Gastrocnemius medialis (tissue), 4 donors: ENCODE measurements at regions of chrX and their contacts with region 1.

Region 1: DNA sequence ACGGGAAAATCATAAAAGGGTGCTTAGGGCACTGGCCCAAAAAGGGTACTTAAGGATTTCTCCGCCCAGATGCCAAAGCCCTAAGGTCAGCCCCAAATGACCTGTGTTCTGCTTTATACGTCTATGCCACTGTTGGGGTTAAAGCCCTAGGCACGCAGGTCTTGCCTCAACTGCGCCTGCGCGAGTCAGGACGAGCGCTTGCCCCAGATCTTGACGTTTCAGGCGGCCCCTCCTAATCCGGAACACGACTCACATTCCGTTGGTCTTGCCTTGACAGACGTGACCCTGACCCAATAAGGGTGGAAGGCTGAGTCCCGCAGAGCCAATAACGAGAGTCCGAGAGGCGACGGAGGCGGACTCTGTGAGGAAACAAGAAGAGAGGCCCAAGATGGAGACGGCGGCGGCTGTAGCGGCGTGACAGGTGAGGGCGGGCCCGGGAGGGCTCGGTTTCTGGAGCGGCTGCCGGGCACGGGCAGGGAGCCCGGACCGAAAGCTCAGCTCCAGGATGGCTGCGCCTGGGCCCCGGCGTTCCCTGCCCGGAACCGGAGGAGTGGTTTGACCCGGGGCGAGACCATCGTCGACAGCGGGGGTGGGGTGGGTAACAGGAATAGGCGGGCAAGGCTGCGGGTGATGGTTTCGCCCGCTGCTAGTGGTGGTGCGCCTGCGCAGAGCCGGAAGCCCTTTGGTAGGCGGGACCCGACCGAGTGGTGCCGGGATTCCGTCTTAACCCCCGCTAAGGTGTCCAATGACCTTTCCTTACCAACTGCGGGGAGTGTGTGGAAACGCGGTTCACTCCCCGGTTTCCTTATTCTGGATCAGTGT is at the start of gene ARAF:
- DNase-seq: peak; percentile 96 to 99
- ATAC-seq: peak; percentile 91 to 93
- H3K4me3 ChIP-seq: peak within 1 kb of the TSS; percentile 66 to 74 (median 72)
- H3K27ac ChIP-seq: peak within 1 kb of the TSS; percentile 86 to 98 (median 94)
- H3K4me1 ChIP-seq: peaks cover 3 to 17% of the 10 kb centered on the region in 2 donors
- H3K27me3 ChIP-seq: no peaks in the 10 kb centered on the region
- CTCF ChIP-seq: no peak
- POLR2A ChIP-seq: peak; percentile 29 to 45
- total RNA-seq, gene ARAF: 44.8 to 93.3 (median 66.7) TPM

Region 2: DNA sequence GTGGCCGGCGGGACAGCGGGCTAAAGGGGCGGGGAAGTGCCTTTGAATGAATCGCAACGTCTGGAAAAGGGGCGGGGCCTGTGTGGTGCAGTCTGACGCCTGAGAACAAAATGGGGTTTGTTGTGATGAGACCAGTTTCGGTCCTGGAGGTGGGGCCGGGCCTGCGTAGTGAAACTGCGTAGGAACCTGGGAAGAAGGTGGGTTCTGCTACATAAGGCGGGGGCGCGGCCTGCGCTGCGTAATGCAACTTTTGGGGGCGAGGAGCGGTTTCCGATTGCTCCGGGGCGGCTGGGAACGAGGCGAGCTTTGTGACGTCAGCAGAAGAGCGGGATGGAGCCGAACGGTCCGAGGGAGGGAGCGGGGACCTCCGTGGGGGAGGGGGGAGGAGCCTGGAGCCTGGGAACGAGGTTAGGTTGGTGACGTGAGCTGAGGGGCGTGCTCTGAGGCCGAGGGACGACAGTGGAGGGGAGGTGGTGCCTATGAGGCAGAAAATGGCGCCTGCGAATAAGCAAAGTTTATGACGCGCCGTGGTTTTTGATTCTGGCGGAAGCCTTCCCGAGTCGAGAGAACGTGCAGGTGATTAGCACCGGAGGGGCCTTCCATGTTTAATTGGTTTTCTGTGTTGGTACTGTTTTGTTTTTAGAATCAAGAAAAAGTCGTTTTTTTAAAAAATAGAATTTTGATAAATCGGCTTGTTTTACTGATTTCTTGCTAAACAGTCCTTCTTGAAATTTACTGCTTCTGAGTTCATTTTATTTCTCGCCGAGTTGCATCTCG is 327.5 kb before region 1 on chrX:
- in situ Hi-C with region 1: no loop called
- intact Hi-C with region 1: loop called (anchors 2 kb)
- DNase-seq: peak; percentile 91 to 94
- ATAC-seq: peak; percentile 92 to 94
- H3K4me3 ChIP-seq: peak overlapping the region; percentile 57 to 84 (median 74)
- H3K27ac ChIP-seq: peak overlapping the region; percentile 88 to 93 (median 91)
- H3K4me1 ChIP-seq: peaks cover 0 to 3% of the 10 kb centered on the region in 2 donors
- H3K27me3 ChIP-seq: no peaks in the 10 kb centered on the region
- CTCF ChIP-seq: no peak
- POLR2A ChIP-seq: peak; percentile 36 to 76

Region 3: DNA sequence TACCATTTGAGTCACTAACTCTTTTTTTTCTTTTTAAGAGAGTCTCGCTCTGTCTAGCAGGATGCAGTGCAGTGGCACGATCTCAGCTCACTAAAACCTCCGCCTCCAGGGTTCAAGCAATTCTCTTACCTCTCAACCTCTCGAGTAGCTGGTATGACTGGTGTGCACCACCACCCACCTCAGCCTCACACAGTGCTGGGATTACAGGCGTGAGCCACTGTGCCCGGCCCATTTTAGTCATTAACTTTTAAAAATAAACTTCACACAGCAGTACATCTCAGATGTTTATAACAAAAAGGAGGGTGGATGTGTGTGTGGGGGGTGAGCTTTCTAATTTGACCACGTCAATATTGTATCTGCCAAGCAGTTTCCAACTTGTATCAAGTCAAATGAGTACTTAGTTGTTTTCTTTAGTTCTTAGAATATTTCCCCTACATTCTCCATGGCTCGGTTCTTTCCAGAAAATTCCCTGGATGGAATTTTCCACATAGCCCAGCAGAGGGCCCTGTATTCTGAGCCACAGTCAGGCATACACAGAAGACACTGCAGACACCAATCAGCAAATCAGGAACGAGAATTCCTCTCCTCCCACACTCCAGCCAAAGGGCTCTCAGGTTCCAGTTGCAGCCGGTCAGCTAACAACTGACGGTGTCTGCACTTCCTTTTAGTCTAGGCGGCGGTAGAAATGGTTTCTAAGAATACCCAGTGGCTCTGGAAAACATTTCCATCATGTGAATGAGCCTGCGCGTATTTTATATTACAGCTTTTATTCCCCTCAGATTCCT is 20.1 kb before region 1 on chrX:
- in situ Hi-C with region 1: no loop called
- intact Hi-C with region 1: loop called (anchors 1 kb)
- DNase-seq: peak; percentile 80 to 87
- ATAC-seq: peak; percentile 100
- H3K4me3 ChIP-seq: peak overlapping the region in 1 of 4 donors; percentile 11
- H3K27ac ChIP-seq: peak overlapping the region; percentile 78 to 85 (median 82)
- H3K4me1 ChIP-seq: peaks cover 10 to 16% of the 10 kb centered on the region in 2 donors
- H3K27me3 ChIP-seq: no peaks in the 10 kb centered on the region
- CTCF ChIP-seq: peak; percentile 41 to 58 (median 52)
- POLR2A ChIP-seq: peak; percentile 27 to 47

Region 4: DNA sequence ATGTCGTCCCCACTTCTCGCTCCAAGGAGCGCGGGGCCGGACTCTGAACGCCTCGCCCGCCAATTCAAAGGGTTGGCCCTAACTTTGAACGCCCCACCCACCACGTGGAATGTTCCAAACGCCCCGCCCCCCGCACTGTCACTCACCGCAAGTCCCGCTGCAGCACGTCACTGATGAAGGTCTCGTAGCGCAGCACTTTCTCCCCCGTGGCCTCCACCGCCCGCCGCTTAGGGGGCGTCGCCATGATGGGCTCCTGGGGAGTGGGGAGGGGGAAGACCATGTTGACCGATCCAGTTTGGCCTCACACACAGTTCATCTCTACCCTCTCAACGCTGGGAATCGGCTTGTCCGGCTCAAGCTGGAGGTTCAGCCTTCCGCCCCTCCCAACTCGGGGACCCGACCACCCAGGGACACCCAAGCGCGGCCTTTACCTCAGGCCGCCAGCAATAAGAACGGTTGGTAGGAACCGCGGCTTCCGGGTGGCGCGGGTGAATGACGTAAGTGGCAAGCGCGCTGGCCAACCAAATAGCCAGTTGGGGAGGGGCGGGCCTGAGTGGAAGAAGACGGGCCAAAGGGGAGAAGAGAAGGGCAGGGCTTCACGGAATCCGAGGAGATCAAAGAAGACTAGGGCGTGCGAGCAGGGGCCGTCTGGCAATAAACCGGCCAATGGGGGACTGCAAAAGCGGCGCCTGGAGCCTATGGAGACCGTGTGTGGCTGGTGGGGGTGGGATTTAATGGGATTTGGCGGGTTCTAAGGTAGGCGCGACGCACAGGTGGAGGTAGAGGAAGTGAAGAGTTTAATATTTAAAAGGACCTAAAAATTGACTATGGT is 97.9 kb after region 1 on chrX and contains the start of gene UXT:
- in situ Hi-C with region 1: loop called in 1 of 4 experiments (anchors 10 kb)
- intact Hi-C with region 1: loop called (anchors 2 kb)
- DNase-seq: peak; percentile 79 to 89
- ATAC-seq: peak; percentile 95 to 96
- H3K4me3 ChIP-seq: peak within 1 kb of the TSS; percentile 57 to 81 (median 70)
- H3K27ac ChIP-seq: peak within 1 kb of the TSS; percentile 88 to 96 (median 92)
- H3K4me1 ChIP-seq: no peaks in the 10 kb centered on the region
- H3K27me3 ChIP-seq: no peaks in the 10 kb centered on the region
- CTCF ChIP-seq: no peak
- POLR2A ChIP-seq: peak; percentile 66 to 68
- total RNA-seq, gene UXT: 92.3 to 153 (median 109) TPM

Region 5: DNA sequence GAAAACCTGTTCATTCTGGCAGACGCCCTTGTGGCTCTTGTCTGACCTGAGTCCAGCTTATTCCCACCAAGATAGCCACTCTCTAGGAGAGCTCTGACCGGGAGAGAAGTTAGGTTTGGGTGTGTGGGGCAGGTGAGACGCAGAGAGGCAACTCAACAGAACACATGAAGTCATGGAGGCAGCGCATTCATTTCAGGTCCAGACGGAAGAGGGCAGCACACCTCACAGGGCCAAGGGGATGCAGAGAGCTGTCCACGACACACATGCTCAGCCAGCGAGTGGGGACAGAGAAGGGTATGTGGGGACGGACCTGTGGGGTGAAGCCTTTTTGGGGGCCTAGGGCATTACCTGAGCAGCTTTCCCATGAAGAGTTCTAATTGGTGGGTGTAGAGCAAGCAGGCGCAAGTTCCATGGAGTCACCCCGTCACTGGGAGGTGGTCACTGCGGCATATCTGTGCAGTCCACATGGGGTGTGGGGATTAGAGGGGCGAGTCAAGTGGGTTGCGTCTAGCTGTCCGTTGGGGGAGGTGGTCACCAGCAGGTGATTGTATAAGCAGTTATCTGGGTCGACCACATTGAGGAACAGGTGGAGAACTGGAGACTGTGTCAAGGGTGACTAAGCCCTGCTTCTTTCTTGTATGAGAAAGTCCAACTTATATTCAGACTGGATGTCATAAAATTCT is 122.2 kb after region 1 on chrX:
- in situ Hi-C with region 1: no loop called
- intact Hi-C with region 1: no loop called
- DNase-seq: no peak
- ATAC-seq: no peak
- H3K4me3 ChIP-seq: no peak overlapping the region
- H3K27ac ChIP-seq: no peak overlapping the region
- H3K4me1 ChIP-seq: no peaks in the 10 kb centered on the region
- H3K27me3 ChIP-seq: no peaks in the 10 kb centered on the region
- CTCF ChIP-seq: no peak
- POLR2A ChIP-seq: no peak